CD4-positive, alpha-beta T cell (primary cell): ENCODE measurements at regions of chr3 and their contacts with region 1.

Region 1: DNA sequence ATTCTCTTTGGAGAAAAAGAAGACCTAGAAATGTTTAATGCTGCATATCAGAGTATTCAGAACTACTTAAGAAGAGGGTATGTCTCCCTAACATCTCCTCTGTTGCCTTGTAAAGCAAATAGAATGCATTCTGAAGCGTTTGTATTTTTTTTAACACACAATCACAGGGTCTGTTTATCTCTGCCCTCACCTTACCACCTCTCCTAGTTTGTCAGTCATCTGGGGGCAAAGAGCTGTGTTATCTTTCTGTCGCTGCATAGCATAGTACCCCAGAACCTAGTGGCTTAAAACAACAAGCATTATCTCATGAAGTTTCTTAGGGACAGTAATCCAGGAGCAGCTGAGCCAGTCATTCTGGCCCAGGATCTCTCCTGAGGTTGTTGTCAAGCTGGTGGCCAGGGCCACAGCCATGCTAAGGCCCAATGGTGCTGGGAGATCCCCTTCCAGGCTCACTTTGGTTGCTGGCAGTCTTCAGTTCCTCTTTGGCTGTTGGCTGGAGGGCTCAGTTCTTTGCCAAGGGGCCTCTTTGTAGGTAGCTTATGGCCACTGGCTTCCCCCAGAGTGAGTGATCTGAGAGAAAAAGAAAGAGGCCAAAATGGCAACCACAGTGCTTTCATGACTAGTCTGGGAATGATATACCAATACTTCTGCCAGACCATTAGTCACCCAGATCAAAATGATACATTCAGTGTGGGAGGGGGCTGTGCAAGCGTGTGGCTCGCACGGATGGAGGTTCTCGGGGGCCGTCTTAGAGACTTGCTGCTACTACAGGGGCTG is 17.8 kb downstream of the EDEM1 start:
- DNase-seq: no peak
- ATAC-seq: no peak
- H3K4me3 ChIP-seq: no peak overlapping the region
- H3K4me3 Mint-ChIP-seq: no peak overlapping the region
- H3K27ac ChIP-seq: no peak overlapping the region
- H3K27ac Mint-ChIP-seq: peak overlapping the region; percentile 39
- H3K4me1 ChIP-seq: peaks cover 2% of the 10 kb centered on the region
- H3K4me1 Mint-ChIP-seq: peaks cover 13% of the 10 kb centered on the region
- H3K27me3 ChIP-seq: no peaks in the 10 kb centered on the region
- H3K27me3 Mint-ChIP-seq: no peaks in the 10 kb centered on the region
- CTCF ChIP-seq: no peak

Region 2: GRCh38 chr3:5170975-5171374 is 34.4 kb before region 1 on chr3:
- CTCF ChIA-PET with region 1: no interaction called
- POLR2A ChIA-PET with region 1: no interaction called
- intact Hi-C with region 1: loop called in 1 of 2 experiments (anchors 5 kb)
- DNase-seq: no peak
- ATAC-seq: no peak
- H3K4me3 ChIP-seq: no peak overlapping the region
- H3K4me3 Mint-ChIP-seq: no peak overlapping the region
- H3K27ac ChIP-seq: no peak overlapping the region
- H3K27ac Mint-ChIP-seq: no peak overlapping the region
- H3K4me1 ChIP-seq: peaks cover 3% of the 10 kb centered on the region
- H3K4me1 Mint-ChIP-seq: peaks cover 35% of the 10 kb centered on the region
- H3K27me3 ChIP-seq: no peaks in the 10 kb centered on the region
- H3K27me3 Mint-ChIP-seq: no peaks in the 10 kb centered on the region
- CTCF ChIP-seq: no peak